ENCODE measurements at regions of chr1 and their contacts with region 1.

Region 1: GRCh38 chr1:147172168-147172992 is at the start of gene PRKAB2:
- DNase-seq: peak; percentile 95
- CTCF ChIP-seq: peak; percentile 99

Region 2: DNA sequence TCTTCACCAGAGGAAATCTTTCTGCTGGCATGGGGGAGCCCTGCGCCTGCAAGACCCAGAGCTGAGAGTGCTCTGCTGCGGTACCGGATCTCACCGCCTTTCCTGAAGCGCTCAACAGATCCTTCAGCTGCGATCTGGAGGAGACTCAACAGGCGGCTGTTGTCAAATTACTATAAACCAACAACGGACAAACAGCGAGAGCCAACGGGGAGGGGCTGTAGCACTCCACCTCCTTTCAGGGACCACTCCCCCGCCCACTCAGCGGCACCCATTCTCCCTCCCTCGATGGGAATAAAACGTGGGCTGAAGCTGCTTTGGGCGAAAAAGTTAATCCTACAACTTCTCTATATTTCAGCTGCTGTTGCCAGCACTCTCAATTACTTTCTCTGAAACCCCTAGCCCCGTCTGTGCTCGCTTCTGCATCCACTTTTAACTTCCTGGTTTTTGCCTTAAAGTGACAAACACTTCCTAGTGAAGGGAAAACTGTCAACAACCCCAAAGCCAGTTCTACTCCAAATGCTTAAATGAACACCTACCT is 52.9 kb after region 1 on chr1 and contains the start of gene FMO5:
- in situ Hi-C with region 1: loop called (anchors 10 kb)
- DNase-seq: peak; percentile 67
- CTCF ChIP-seq: no peak

Region 3: DNA sequence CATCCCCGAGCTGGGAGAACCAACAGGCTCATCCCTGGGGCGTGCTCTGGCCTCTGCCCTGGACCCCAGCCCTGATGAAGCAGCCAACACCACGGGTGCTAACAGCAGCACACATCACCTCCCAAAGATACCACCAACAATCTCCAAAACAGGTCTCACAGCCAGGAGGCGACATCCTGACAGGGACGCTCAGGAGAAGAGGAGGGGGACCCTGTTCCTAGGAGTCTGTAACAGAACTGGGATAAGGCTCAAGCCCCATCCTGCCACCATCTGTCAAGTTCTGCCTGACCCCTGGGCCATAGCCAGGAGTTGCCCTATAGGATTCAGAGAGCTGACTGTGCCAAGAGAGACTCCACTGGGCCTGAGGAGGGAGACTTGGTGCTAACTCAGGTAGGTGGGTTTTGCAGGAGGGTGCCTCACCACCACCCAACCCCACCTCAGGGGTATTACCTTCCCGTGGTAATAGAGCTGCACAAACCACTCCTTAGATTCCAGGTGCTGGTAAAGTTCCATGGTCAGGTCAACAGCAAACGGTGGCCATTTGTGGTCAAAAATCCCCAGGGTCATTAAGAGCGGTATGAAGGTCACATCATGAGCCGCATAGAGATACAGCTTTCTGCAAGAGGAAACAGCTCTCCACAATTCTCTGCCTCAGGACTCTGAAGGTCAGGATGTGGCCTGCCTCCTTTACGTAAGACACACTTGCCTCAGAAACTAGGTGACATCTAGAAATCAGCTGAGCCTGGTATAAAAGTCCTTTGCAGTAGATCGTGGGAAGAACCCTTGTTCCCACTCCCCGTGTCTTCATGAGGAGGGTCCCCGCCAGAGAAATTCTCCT is 475.6 kb after region 1 on chr1:
- in situ Hi-C with region 1: no loop called
- DNase-seq: no peak
- CTCF ChIP-seq: no peak